ENCODE measurements at regions of chr2 and their contacts with region 1.

Region 1: GRCh38 chr2:206981739-206982340 is 42.5 kb downstream of the CPO start:
- DNase-seq: peak; percentile 53 to 80 (median 71)
- ATAC-seq: peak; percentile 98
- H3K4me3 ChIP-seq: no peak overlapping the region
- H3K27ac ChIP-seq: no peak overlapping the region
- H3K4me1 ChIP-seq: peaks cover 3 to 33% of the 10 kb centered on the region in 2 donors
- H3K27me3 ChIP-seq: no peaks in the 10 kb centered on the region
- CTCF ChIP-seq: peak; percentile 52 to 74

Region 2: GRCh38 chr2:207166039-207166348 is 184.2 kb after region 1 on chr2:
- intact Hi-C with region 1: loop called in 1 of 2 experiments (anchors 10 kb)
- DNase-seq: peak; percentile 97 to 100 (median 98)
- ATAC-seq: peak; percentile 89
- H3K4me3 ChIP-seq: peak overlapping the region; percentile 66 to 68
- H3K27ac ChIP-seq: peak overlapping the region; percentile 100
- H3K4me1 ChIP-seq: peaks cover 13 to 37% of the 10 kb centered on the region in 2 donors
- H3K27me3 ChIP-seq: no peaks in the 10 kb centered on the region
- CTCF ChIP-seq: no peak